ENCODE measurements at regions of chr5 and their contacts with region 1.

Region 1: GRCh38 chr5:127564002-127564769 is 46.7 kb downstream of the PRRC1 start:
- DNase-seq: peak; percentile 45
- CTCF ChIP-seq: peak; percentile 64

Region 2: DNA sequence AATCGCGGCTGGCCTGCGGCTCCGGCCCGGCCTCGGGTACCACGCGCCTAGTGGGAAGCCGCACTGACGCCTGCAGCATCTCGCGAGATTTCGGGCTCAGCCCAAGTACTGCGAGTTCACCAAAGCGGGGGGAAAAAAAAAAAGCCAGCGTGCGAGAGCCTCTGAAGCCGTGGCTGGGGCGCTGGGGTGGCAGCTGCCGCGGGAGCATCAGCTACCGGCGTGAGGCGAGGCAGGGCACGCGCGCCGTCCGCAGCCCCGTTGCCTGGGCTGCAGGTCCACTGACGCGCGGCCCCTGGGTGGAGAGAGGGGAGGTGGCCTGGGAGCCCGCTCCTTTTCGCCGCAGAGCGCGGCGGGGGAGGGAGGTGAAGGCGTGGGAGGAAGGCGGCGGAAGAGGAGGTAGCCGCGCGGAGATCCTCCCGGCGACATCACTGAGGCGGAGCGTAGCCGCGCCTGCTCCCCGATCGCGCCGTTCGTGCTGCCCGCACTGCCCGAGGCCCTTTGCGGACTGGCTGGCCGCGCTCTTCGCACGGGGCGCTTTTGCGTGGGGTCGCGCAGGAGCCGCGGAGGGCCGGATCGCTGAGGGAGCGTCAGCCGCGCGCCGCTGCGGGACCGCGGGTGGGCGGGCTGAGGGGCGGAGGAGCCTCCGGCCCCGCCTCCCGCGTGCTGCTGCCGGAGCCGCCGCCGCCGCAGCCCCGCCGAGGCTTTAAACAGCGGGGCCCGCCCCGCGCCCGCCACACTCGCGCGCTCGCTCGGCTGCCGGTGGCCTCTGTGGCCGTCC is 519.0 kb after region 1 on chr5 and contains the start of gene SLC12A2:
- in situ Hi-C with region 1: loop called (anchors 25 kb)
- DNase-seq: peak; percentile 89
- CTCF ChIP-seq: no peak

Region 3: DNA sequence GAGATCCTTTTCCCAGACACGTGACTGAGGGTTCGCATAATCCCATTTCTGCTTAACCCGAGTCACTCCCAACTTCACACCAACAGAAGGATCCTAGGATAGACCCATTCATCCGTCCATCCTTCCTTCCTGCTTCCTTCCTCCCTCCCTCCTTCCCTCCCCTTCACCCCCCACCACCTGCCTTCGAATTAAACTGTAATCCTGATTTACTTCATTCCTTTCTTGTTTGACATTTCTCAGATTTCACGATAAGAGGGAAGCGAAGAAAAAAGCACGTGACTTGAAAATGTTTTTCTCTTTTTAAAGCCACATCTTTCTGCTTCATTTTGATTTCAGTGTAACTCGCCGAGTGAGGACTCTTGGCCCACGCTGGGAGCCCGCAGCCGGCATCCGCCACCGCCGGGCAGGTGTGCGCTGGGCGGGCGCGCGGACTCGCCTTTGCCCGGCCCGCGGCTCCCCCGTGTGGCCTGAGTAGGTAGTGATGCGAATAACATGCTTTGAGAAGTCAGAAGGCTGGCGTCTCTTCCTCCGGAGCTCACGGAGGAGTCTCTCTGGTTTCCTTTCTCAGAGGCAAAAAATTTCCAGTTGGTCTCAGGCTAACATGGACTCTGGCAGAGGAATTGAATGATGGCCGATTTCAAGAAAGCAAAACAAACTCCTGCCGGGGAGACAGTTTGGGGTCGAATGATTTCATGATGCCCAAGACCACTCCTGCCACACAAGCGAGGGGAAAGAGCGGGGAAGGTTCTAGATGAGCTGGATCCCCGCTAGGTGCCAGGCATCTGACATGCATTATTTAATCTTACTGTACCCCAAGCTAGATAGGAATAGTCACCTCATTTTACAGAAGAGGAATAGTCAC is 637.1 kb after region 1 on chr5:
- in situ Hi-C with region 1: loop called (anchors 5 kb)
- DNase-seq: peak; percentile 85
- CTCF ChIP-seq: peak; percentile 89

Region 4: GRCh38 chr5:128498844-128499455 is 934.8 kb after region 1 on chr5:
- in situ Hi-C with region 1: loop called (anchors 25 kb)
- DNase-seq: peak; percentile 18
- CTCF ChIP-seq: peak; percentile 21

Region 5: DNA sequence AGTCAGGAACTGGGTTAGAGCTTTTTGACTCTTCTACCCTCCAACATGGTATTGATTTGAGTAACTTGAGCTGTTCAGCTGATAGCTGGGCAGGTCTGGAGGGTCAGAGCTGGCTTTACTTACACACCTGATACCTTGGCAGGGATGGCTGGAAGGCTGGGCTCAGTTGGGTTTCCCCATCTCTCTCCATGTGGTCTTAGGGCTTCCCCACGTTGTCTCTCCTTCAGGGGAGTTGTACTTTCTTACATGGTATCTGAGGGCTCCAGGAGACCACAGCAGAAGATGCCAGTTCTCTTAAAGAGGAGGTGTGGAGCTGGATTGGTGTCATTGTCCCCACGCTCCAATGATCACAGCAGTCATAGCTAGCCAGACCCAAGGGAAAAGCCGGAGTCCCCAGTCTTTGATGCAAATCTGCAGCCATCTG is 1556.0 kb after region 1 on chr5:
- in situ Hi-C with region 1: loop called (anchors 25 kb)
- DNase-seq: no peak
- CTCF ChIP-seq: no peak

Measured in GM13976 (cell line).